OCI-LY7 (cell line): ENCODE measurements at regions of chr11 and their contacts with region 1.

Region 1: GRCh38 chr11:27183672-27184457 is 143.2 kb downstream of the BBOX1 start:
- DNase-seq: peak; percentile 64
- H3K4me3 ChIP-seq: no peak overlapping the region
- H3K27ac ChIP-seq: no peak overlapping the region
- H3K4me1 ChIP-seq: no peaks in the 10 kb centered on the region
- CTCF ChIP-seq: peak; percentile 88

Region 2: DNA sequence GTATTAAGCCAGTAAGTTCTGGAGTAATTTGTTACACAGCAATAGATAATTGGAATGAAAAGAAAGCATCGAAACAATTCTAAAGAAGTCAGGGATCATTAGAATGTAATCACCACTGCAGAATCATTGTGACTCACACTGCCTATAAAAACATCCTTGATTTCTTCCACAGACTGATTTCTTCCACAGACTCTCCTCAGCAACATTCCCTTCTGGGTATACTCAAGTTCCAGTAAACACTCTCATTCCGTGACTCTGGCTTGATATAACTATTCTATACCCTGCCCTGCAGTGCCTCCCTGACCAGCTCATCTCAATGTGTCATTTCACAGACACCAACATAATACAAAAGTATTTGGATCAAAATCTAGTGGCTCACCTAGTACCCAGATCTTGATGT is 22.8 kb before region 1 on chr11:
- CTCF ChIA-PET with region 1: no interaction called
- POLR2A ChIA-PET with region 1: no interaction called
- intact Hi-C with region 1: no loop called
- DNase-seq: no peak
- H3K4me3 ChIP-seq: no peak overlapping the region
- H3K27ac ChIP-seq: no peak overlapping the region
- H3K4me1 ChIP-seq: no peaks in the 10 kb centered on the region
- CTCF ChIP-seq: no peak

Region 3: GRCh38 chr11:27196203-27196897 is 12.5 kb after region 1 on chr11:
- CTCF ChIA-PET with region 1: no interaction called
- POLR2A ChIA-PET with region 1: no interaction called
- intact Hi-C with region 1: no loop called
- DNase-seq: no peak
- H3K4me3 ChIP-seq: no peak overlapping the region
- H3K27ac ChIP-seq: no peak overlapping the region
- H3K4me1 ChIP-seq: peaks cover 5% of the 10 kb centered on the region
- CTCF ChIP-seq: no peak

Region 4: GRCh38 chr11:27296497-27296896 is 112.6 kb after region 1 on chr11:
- CTCF ChIA-PET with region 1: no interaction called
- POLR2A ChIA-PET with region 1: no interaction called
- intact Hi-C with region 1: loop called (anchors 1 kb)
- DNase-seq: peak; percentile 46
- H3K4me3 ChIP-seq: no peak overlapping the region
- H3K27ac ChIP-seq: no peak overlapping the region
- H3K4me1 ChIP-seq: no peaks in the 10 kb centered on the region
- CTCF ChIP-seq: peak; percentile 79

Region 5: DNA sequence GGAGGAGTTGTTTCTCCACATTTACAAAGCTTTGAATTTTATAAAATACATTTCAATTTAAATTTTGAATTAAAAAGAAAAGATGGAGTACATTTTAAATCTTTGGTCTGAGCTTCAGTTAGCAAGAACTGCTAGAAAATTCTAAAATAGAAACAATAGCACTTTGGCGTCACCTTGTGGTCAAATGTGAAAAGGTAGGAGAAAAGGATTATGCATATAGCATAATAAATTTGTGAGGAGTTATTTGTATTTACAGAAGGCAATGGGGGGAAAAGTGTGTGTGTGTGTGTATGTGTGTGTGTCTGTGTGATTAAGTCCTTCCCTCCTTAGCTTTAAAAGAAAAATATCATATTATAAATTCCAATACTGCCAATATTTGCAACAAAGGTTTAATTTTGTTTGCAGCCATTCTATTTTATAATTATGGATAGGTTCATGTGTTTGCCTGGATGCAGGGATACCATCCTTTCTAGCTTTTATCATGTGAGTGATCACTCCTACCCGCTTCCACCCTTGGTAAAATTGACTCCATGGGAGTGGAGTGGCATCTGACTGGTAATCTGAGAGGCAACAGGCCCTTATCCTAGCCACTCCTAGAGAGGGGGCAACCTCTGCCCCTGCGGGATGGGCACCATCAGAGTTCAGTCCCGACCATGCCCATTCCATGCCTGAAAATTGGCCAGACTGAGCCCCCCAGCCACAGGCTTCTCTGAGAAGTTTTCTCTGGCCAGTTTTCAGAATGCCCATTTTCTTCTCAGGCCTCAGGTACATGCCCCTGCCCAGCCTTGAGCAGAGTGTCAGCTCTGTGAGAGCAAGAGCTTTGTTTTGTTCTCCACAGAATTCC is 302.3 kb after region 1 on chr11:
- CTCF ChIA-PET with region 1: no interaction called
- POLR2A ChIA-PET with region 1: interaction called, 3 read pairs
- intact Hi-C with region 1: loop called (anchors 1 kb)
- DNase-seq: peak; percentile 61
- H3K4me3 ChIP-seq: no peak overlapping the region
- H3K27ac ChIP-seq: no peak overlapping the region
- H3K4me1 ChIP-seq: no peaks in the 10 kb centered on the region
- CTCF ChIP-seq: peak; percentile 99